GM12878 (cell line): ENCODE measurements at regions of chr16 and their contacts with region 1.

Region 1: DNA sequence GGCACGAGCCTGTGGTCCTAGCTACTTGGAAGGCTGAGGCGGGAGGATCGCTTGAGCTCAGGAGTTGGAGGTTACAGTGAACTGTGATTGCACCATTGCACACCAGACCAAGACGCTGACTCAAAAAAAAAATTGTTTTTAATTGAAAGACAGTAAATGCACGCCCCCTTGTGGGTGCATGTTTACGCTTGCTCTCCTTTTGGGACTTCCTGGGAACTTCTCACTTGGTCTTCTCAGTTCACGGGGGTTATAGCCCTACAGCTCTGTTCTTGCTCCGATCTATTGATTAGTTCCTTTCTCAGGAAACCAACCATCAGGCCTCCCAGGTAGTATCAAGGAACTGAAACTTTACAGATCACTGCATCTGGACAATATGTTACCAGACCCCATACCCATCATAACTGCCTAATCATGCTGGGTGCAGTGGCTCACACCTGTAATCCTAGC is 14.2 kb upstream of the RIPOR1 start:
- DNase-seq: peak; percentile 90
- ATAC-seq: peak; percentile 71
- H3K4me3 ChIP-seq: no peak overlapping the region
- H3K27ac ChIP-seq: peak overlapping the region; percentile 38; the same call in 1 of the 2 replicates
- H3K4me1 ChIP-seq: peaks cover 45% of the 10 kb centered on the region
- H3K27me3 ChIP-seq: no peaks in the 10 kb centered on the region
- CTCF ChIP-seq: peak; percentile 66 to 82 (median 71); a peak in 5 of 6 replicates
- EP300 ChIP-seq: no peak
- POLR2A ChIP-seq: no peak
- RAD21 ChIP-seq: peak; percentile 77

Region 2: GRCh38 chr16:67169642-67170167 is 344.7 kb before region 1 on chr16:
- CTCF ChIA-PET with region 1: no interaction called
- POLR2A ChIA-PET with region 1: no interaction called
- RAD21 ChIA-PET with region 1: no interaction called
- SMC1A ChIA-PET with region 1: no interaction called
- in situ Hi-C with region 1: no loop called
- intact Hi-C with region 1: no loop called
- DNase-seq: no peak
- ATAC-seq: peak; percentile 22
- H3K4me3 ChIP-seq: peak overlapping the region; percentile 73
- H3K27ac ChIP-seq: peak overlapping the region; percentile 5; the same call in 1 of the 2 replicates
- H3K4me1 ChIP-seq: peaks cover 45% of the 10 kb centered on the region
- H3K27me3 ChIP-seq: peaks cover 2 to 11% of the 10 kb centered on the region in 2 experiments
- CTCF ChIP-seq: peak; percentile 55 to 72 (median 59)
- EP300 ChIP-seq: no peak
- POLR2A ChIP-seq: no peak
- RAD21 ChIP-seq: peak; percentile 32; the same call in 1 of the 2 replicates

Region 3: DNA sequence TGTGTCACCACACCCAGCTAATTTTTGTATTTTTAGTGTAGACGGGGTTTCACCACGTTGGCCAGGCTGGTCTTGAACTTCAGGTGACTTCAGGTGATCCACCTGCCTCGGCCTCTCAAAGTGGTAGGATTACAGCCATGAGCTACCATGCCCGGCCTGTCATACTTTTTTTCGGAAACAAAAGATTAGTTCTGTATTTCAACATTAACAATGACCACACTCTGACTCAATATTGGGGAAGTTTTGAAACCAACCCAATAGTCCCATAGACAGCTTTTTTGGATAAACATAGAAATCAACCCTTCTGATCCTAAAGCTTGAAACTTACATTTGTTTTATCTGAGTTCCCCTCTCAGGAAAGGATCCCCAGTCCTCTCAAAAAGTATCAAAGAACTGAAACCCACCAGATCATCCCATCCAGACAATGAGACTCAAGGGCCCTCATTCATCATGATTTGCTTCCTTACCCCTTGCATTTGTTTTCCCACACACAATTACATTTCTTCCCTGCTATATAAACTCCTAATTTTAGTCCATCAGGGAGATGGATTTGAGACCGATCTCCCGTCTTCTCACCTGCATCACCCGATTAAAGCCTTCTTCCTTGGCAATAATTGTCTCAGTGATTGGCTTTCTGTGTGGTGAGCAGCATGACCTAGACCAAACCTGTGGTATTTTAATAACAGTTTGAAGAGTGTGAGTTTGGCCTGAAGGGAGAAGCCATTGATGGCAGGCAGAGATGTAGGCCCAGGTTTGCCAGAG is 23.9 kb before region 1 on chr16:
- CTCF ChIA-PET with region 1: interaction called, 453 read pairs
- POLR2A ChIA-PET with region 1: interaction called, 42 read pairs
- RAD21 ChIA-PET with region 1: interaction called, 172 read pairs
- SMC1A ChIA-PET with region 1: interaction called, 92 read pairs
- in situ Hi-C with region 1: no loop called
- intact Hi-C with region 1: loop called (anchors 1 kb)
- DNase-seq: no peak
- ATAC-seq: no peak
- H3K4me3 ChIP-seq: no peak overlapping the region
- H3K27ac ChIP-seq: no peak overlapping the region
- H3K4me1 ChIP-seq: peaks cover 12% of the 10 kb centered on the region
- H3K27me3 ChIP-seq: no peaks in the 10 kb centered on the region
- CTCF ChIP-seq: no peak
- EP300 ChIP-seq: no peak
- POLR2A ChIP-seq: no peak
- RAD21 ChIP-seq: no peak

Region 4: DNA sequence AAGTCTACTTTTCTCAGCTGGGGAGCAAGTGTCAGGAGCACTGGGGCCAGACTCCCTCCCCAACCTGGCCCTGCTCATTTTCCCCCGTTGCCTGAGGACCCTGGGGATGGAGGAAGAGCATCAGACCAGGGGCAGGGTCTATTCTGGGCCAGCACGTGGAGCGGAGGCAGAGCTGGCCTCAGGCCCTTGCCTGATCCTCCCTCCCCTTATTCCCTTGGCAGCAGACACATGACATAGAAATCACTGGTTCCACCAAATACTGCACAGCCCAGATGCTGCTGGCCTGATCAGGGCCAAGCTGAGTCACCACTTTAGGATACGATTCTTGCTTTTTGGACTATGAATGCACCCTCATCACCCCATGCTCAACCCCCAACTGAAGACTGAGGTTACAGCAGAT is 15.3 kb before region 1 on chr16:
- CTCF ChIA-PET with region 1: interaction called, 453 read pairs
- POLR2A ChIA-PET with region 1: interaction called, 4 read pairs
- RAD21 ChIA-PET with region 1: interaction called, 172 read pairs
- SMC1A ChIA-PET with region 1: interaction called, 78 read pairs
- in situ Hi-C with region 1: no loop called
- intact Hi-C with region 1: loop called (anchors 1 kb)
- DNase-seq: no peak
- ATAC-seq: no peak
- H3K4me3 ChIP-seq: no peak overlapping the region
- H3K27ac ChIP-seq: no peak overlapping the region
- H3K4me1 ChIP-seq: no peaks in the 10 kb centered on the region
- H3K27me3 ChIP-seq: no peaks in the 10 kb centered on the region
- CTCF ChIP-seq: no peak
- EP300 ChIP-seq: no peak
- POLR2A ChIP-seq: no peak
- RAD21 ChIP-seq: no peak

Region 5: DNA sequence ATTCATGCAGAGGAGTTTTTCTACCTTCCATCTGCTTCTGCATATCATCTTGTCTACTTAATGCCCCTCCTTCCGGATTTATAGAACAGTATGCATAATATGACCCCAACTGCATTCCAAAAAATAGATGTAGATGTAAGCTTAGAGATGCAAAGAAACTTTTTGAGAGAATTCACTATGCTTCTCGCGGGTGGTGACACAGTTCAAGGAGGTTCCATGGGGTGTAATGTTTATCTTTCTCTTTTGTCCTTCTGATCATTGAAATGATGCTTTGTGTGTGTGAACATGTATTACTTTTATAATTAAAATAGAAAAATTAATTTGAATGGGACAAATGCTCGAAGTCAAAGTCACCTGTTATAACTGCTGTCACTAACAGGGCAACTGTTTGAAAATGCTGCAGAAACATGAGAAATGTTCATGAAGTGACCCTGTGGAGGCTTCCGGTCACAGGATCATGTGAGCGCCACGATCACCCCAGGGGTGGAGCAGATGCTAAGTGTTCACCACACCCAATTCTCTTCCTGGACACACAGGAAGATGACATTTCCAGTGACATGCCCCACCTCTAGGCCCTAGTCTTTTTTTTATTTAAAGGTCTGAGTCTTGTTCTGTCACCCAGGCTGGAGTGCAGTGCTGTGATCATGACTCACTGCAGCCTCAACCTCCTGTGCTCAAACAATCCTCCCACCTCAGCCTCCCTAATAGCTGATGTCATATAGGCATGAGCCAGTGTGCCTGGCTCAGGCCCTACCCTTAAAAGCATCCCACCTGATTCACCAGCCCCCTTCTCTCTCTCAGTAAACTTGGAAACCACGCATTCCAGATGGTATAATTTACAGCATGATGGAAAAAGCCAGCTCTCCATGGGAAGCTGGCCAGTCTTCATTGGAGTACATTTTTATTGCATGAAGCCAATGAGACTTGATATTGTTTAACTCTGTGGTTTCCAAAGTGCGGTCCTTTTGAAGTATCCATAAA is 10.1 kb before region 1 on chr16:
- CTCF ChIA-PET with region 1: interaction called, 453 read pairs
- POLR2A ChIA-PET with region 1: no interaction called
- RAD21 ChIA-PET with region 1: interaction called, 5 read pairs
- SMC1A ChIA-PET with region 1: interaction called, 78 read pairs
- in situ Hi-C with region 1: no loop called
- intact Hi-C with region 1: no loop called
- DNase-seq: no peak
- ATAC-seq: peak; percentile 25; the same call in 2 of the 3 replicates
- H3K4me3 ChIP-seq: no peak overlapping the region
- H3K27ac ChIP-seq: no peak overlapping the region
- H3K4me1 ChIP-seq: peaks cover 15% of the 10 kb centered on the region
- H3K27me3 ChIP-seq: no peaks in the 10 kb centered on the region
- CTCF ChIP-seq: no peak
- EP300 ChIP-seq: no peak
- POLR2A ChIP-seq: no peak
- RAD21 ChIP-seq: no peak

Region 6: DNA sequence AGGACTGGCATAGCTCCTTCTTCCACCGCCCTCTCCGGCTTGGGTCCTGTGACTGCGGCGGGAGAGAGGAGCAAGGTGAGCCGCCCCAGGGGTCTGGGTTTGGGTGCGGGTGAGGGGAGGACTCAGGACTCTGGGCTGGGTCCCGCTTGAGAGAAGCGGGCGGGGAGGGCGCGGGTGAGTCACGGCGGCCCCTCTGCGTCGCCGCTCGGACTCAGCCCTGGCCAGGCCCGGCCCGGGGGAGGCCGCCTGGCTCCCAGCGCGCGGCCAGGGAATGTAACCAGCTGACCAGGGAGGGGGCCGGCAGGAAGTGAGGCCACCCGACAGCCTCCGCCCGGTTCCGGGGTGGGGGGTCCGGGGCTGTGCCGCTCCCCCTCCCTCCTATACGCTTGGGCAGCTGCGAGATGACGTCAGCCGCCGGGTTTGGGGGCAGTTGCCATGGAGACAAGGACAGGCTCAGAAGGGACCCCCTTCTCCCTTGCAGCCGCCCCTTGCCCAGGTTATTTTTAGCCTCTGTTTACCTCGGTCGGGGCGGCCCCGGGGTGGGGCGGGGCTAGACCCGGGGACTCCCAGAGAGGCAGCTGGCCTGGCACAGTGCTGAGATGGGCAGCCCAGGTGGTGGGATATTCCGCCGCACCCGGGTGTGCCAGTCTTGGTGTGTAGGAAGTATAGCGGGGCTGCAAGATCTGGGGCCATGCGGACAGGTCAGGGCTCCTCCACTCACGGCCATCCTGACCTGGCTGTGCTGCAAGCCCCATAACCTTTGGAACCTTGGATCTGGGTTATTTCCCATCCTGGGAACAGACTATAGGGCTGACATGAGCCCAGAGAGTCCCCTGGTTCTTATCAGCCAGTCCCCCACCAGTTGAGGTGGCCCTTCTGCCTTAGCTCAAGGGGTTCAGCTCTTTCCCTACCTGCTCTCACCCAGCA is 15.9 kb after region 1 on chr16:
- CTCF ChIA-PET with region 1: interaction called, 16 read pairs
- POLR2A ChIA-PET with region 1: interaction called, 56 read pairs
- RAD21 ChIA-PET with region 1: interaction called, 8 read pairs
- SMC1A ChIA-PET with region 1: interaction called, 5 read pairs
- in situ Hi-C with region 1: no loop called
- intact Hi-C with region 1: no loop called
- DNase-seq: no peak
- ATAC-seq: peak; percentile 66
- H3K4me3 ChIP-seq: peak overlapping the region; percentile 90; the same call in 1 of the 2 replicates
- H3K27ac ChIP-seq: peak overlapping the region; percentile 22; the same call in 1 of the 2 replicates
- H3K4me1 ChIP-seq: peaks cover 34% of the 10 kb centered on the region
- H3K27me3 ChIP-seq: no peaks in the 10 kb centered on the region
- CTCF ChIP-seq: no peak
- EP300 ChIP-seq: 0 out of 4 replicates have a peak, but pooled peaks of 1 of the 2 experiments have one; percentile 5
- POLR2A ChIP-seq: peak; percentile 57
- RAD21 ChIP-seq: no peak